ENCODE measurements at regions of chr19 and their contacts with region 1.

Region 1: DNA sequence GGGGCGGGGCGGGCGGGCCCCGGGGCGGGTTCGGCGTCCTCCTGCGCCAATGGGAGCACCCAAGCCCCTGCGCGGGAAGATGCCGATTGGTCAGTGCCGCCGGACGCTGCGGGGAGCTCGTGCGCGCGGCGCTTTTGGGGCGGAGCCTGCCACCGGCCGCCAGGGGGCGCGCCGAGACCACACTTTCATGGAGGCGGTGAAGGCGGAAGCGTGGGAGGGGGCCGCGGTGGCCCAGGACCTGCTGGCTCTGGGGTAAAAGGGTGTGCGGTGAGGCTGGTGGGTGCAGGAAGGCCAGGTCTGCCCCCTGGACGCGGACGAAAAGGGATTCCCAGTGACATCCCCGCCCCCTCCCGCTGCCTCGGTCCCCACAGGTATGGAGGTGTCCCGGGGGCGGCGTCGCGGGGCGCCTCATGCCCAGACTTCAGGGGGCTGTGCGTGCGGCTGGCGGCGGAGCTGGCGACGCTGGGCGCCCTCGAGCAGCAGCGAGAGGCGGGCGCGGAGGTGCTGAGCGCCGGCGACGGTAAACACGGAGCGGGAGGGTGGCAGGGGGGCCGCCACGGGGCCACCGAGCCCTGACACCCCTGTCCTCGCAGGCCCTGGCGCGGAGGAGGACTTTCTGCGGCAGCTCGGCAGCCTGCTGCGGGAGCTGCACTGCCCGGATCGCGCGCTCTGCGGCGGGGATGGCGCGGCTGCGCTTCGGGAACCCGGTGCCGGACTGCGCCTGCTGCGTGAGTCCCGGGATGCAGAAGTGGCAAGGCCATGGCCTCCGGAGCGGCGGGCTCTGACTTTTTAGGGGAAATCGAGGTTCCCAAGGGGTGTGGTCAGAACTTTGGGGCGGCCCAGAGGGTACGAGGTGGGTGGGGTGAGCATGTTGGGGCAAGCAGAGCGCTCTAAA is at the start of gene FAM98C:
- DNase-seq: peak; percentile 98
- H3K4me3 Mint-ChIP-seq: peak within 1 kb of the TSS; percentile 99
- H3K27ac Mint-ChIP-seq: peak within 1 kb of the TSS; percentile 92
- H3K4me1 Mint-ChIP-seq: no peaks in the 10 kb centered on the region
- H3K27me3 Mint-ChIP-seq: no peaks in the 10 kb centered on the region
- CTCF ChIP-seq: peak; percentile 99
- total RNA-seq, gene FAM98C: 31.4 and 32.8 TPM in 2 replicates

Region 2: GRCh38 chr19:38374429-38375176 is 28.6 kb before region 1 on chr19 and contains the start of gene PSMD8:
- CTCF ChIA-PET with region 1: interaction called, 26 read pairs
- intact Hi-C with region 1: no loop called
- DNase-seq: peak; percentile 99
- H3K4me3 Mint-ChIP-seq: peak within 1 kb of the TSS; percentile 97
- H3K27ac Mint-ChIP-seq: peak within 1 kb of the TSS; percentile 97
- H3K4me1 Mint-ChIP-seq: peaks cover 22% of the 10 kb centered on the region
- H3K27me3 Mint-ChIP-seq: peaks cover 26% of the 10 kb centered on the region
- CTCF ChIP-seq: peak; percentile 16
- total RNA-seq, gene PSMD8: 226 and 233 TPM in 2 replicates

Region 3: DNA sequence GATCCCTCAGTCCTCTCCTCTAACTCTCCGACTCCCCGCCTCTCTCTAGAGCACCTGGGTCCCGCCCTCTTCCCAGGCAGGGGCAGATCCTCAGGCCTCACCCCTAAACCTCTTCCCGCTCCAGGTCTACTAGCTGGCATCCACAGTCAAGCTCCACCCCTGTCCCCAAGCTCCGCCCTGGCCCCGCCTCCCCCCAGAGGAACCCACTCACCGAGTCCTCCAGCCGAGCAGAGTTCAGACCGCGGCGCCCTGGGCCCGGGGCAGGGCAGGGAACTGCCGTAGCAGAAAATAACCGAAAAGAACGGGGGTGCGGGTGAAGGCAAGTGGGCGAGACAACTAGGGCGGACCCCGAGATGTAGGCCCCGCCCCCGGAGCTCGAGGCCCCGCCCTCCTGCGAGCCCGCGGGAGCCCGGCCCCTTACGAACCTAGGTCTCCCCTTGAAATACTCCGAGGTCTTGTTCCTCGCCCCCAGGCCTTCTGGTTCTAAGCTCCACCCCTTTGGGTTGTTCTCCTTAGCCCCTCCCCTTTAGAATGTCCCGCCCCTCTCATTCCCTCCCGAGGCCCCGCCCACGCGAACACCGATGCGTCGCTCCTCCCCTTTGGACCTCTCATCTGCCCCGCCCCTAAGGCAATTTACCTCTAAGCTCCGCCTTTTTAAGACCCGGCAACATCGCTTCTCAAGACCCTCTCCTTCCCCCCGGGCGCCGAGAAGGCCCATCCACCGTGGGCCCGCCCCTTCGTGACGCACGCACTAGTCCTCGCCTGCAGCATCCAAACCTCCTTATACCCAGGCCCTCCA is 15.5 kb before region 1 on chr19 and contains the start of gene GGN:
- CTCF ChIA-PET with region 1: interaction called, 23 read pairs
- intact Hi-C with region 1: no loop called
- DNase-seq: peak; percentile 92
- H3K4me3 Mint-ChIP-seq: peak within 1 kb of the TSS; percentile 75
- H3K27ac Mint-ChIP-seq: peak within 1 kb of the TSS; percentile 75
- H3K4me1 Mint-ChIP-seq: peaks cover 19% of the 10 kb centered on the region
- H3K27me3 Mint-ChIP-seq: peaks cover 16% of the 10 kb centered on the region
- CTCF ChIP-seq: no peak
- total RNA-seq, gene GGN: 0.40 and 0.64 TPM in 2 replicates

Region 4: GRCh38 chr19:38452428-38453366 is 49.5 kb after region 1 on chr19:
- CTCF ChIA-PET with region 1: no interaction called
- intact Hi-C with region 1: no loop called
- DNase-seq: peak; percentile 6
- H3K4me3 Mint-ChIP-seq: no peak overlapping the region
- H3K27ac Mint-ChIP-seq: no peak overlapping the region
- H3K4me1 Mint-ChIP-seq: no peaks in the 10 kb centered on the region
- H3K27me3 Mint-ChIP-seq: peaks cover 72% of the 10 kb centered on the region
- CTCF ChIP-seq: no peak

Region 5: GRCh38 chr19:38464421-38465082 is 61.3 kb after region 1 on chr19:
- CTCF ChIA-PET with region 1: no interaction called
- intact Hi-C with region 1: no loop called
- DNase-seq: no peak
- H3K4me3 Mint-ChIP-seq: no peak overlapping the region
- H3K27ac Mint-ChIP-seq: no peak overlapping the region
- H3K4me1 Mint-ChIP-seq: no peaks in the 10 kb centered on the region
- H3K27me3 Mint-ChIP-seq: peaks cover 31% of the 10 kb centered on the region
- CTCF ChIP-seq: no peak

Region 6: GRCh38 chr19:38618590-38619360 is 215.6 kb after region 1 on chr19 and contains the start of gene EIF3K:
- CTCF ChIA-PET with region 1: interaction called, 11 read pairs
- intact Hi-C with region 1: no loop called
- DNase-seq: peak; percentile 99
- H3K4me3 Mint-ChIP-seq: peak within 1 kb of the TSS; percentile 98
- H3K27ac Mint-ChIP-seq: peak within 1 kb of the TSS; percentile 98
- H3K4me1 Mint-ChIP-seq: peaks cover 13% of the 10 kb centered on the region
- H3K27me3 Mint-ChIP-seq: peaks cover 13% of the 10 kb centered on the region
- CTCF ChIP-seq: no peak
- total RNA-seq, gene EIF3K: 334 and 338 TPM in 2 replicates

Region 7: GRCh38 chr19:38634757-38635482 is 231.7 kb after region 1 on chr19:
- CTCF ChIA-PET with region 1: interaction called, 21 read pairs
- intact Hi-C with region 1: loop called (anchors 2 kb)
- DNase-seq: peak; percentile 87
- H3K4me3 Mint-ChIP-seq: no peak overlapping the region
- H3K27ac Mint-ChIP-seq: peak overlapping the region; percentile 52
- H3K4me1 Mint-ChIP-seq: peaks cover 54% of the 10 kb centered on the region
- H3K27me3 Mint-ChIP-seq: no peaks in the 10 kb centered on the region
- CTCF ChIP-seq: peak; percentile 96

Region 8: GRCh38 chr19:38929929-38930775 is 526.9 kb after region 1 on chr19 and contains the start of gene SARS2:
- CTCF ChIA-PET with region 1: interaction called, 20 read pairs
- intact Hi-C with region 1: loop called (anchors 5 kb)
- DNase-seq: peak; percentile 97
- H3K4me3 Mint-ChIP-seq: peak within 1 kb of the TSS; percentile 98
- H3K27ac Mint-ChIP-seq: peak within 1 kb of the TSS; percentile 93
- H3K4me1 Mint-ChIP-seq: peaks cover 23% of the 10 kb centered on the region
- H3K27me3 Mint-ChIP-seq: no peaks in the 10 kb centered on the region
- CTCF ChIP-seq: peak; percentile 99
- total RNA-seq, gene SARS2: 52.1 and 58.1 TPM in 2 replicates